ENCODE measurements at regions of chr7 and their contacts with region 1.

Region 1: DNA sequence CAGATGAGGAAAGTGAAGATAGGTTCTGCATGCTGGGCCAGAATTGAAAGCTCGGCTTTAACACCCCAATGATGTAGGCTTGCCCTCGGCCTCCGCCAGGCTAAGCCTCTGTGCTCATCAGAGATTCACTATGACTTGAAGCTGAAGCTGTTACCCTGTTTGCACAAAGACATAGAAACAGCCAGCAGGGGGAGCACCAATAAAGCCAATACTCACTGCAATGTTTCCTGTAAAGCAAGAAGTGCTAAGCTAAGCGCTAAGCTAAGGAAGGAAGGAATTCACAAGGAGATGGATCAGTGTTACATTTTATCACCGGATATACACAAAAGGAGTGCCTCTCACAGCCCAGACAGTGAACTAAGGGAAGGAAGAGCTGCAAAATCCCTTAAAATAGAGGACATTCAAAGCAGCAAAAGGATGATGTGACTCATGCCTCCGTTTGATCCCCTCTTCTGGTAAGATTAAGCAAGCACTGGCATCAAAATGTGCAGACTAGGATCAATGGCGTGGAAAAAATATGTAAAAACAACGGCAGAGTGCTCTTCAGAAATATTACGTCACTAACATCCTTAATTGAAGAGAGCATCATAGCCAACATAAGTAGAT is 153.8 kb downstream of the COBL start:
- DNase-seq: peak; percentile 41 to 88
- ATAC-seq: peak; percentile 97 to 99
- H3K4me3 ChIP-seq: no peak overlapping the region
- H3K27ac ChIP-seq: no peak overlapping the region
- H3K4me1 ChIP-seq: peaks cover 4% of the 10 kb centered on the region; the same call in 1 of the 3 replicates
- CTCF ChIP-seq: peak; percentile 94
- EP300 ChIP-seq: no peak
- POLR2A ChIP-seq: no peak
- RAD21 ChIP-seq: peak; percentile 86 to 91

Region 2: GRCh38 chr7:50142425-50143017 is 1020.3 kb before region 1 on chr7:
- CTCF ChIA-PET with region 1: interaction called, 25 read pairs
- POLR2A ChIA-PET with region 1: no interaction called
- DNase-seq: peak in 1 of 2 experiments; percentile 40
- ATAC-seq: peak in 1 of 2 experiments; percentile 53; a peak in 2 of 6 replicates
- H3K4me3 ChIP-seq: no peak overlapping the region; the same call in 2 of the 3 replicates
- H3K27ac ChIP-seq: no peak overlapping the region
- H3K4me1 ChIP-seq: no peaks in the 10 kb centered on the region; the same call in 2 of the 3 replicates
- CTCF ChIP-seq: peak; percentile 69
- EP300 ChIP-seq: no peak
- POLR2A ChIP-seq: no peak
- RAD21 ChIP-seq: peak; percentile 56 to 67

Region 3: DNA sequence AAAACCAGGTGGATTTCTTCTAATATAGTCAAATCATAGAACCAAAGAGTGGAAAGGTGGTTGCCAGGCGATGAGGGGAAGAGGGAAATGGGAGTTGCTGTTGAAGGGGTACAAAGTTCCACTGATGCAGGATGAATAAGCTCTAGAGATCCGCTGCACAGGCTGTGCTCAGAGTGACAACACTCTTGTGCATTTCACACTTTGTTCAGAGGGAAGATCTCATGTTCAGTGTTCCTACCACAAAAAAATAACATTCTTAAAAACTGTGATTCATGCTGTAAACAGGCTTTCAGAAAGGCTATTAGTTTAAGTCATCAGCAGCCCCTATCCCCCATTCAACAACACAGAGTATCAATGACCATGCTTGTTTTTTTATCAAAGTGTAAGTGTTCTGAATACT is 60.0 kb before region 1 on chr7:
- CTCF ChIA-PET with region 1: no interaction called
- POLR2A ChIA-PET with region 1: no interaction called
- DNase-seq: no peak
- ATAC-seq: no peak
- H3K4me3 ChIP-seq: no peak overlapping the region
- H3K27ac ChIP-seq: no peak overlapping the region
- H3K4me1 ChIP-seq: no peaks in the 10 kb centered on the region
- CTCF ChIP-seq: no peak
- EP300 ChIP-seq: no peak
- POLR2A ChIP-seq: no peak
- RAD21 ChIP-seq: no peak

Region 4: GRCh38 chr7:51141451-51142003 is 21.3 kb before region 1 on chr7:
- CTCF ChIA-PET with region 1: interaction called, 77 read pairs
- POLR2A ChIA-PET with region 1: no interaction called
- DNase-seq: peak; percentile 13 to 41
- ATAC-seq: peak; percentile 62 to 72; a peak in 5 of 6 replicates
- H3K4me3 ChIP-seq: no peak overlapping the region
- H3K27ac ChIP-seq: no peak overlapping the region
- H3K4me1 ChIP-seq: peaks cover 8% of the 10 kb centered on the region
- CTCF ChIP-seq: peak; percentile 77
- EP300 ChIP-seq: no peak
- POLR2A ChIP-seq: no peak
- RAD21 ChIP-seq: peak; percentile 92 to 93

Region 5: DNA sequence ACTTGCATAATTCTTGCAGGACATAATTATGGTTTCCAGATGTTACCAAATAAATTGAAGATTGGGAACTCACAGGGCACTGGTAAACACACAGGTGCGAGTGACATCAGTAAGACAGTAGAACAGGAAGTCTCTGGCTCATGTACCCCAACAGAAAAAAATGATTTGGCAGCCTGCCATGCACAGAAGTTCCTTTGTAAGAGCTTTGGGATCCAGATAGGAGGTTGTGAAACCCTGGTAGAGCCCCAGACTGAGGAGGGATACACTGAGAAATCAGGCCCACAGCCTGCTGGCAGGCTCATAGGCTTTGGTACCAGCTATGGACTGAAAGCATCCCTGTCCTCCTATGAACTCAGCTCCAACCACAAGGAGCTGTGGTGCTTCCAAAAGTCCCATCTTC is 35.8 kb after region 1 on chr7:
- CTCF ChIA-PET with region 1: interaction called, 25 read pairs
- POLR2A ChIA-PET with region 1: no interaction called
- DNase-seq: no peak
- ATAC-seq: no peak
- H3K4me3 ChIP-seq: no peak overlapping the region
- H3K27ac ChIP-seq: no peak overlapping the region
- H3K4me1 ChIP-seq: no peaks in the 10 kb centered on the region
- CTCF ChIP-seq: no peak
- EP300 ChIP-seq: no peak
- POLR2A ChIP-seq: no peak
- RAD21 ChIP-seq: no peak

Region 6: GRCh38 chr7:51366930-51367613 is 204.2 kb after region 1 on chr7:
- CTCF ChIA-PET with region 1: interaction called, 176 read pairs
- POLR2A ChIA-PET with region 1: no interaction called
- DNase-seq: peak; percentile 57 to 84
- ATAC-seq: peak; percentile 93 to 97
- H3K4me3 ChIP-seq: no peak overlapping the region
- H3K27ac ChIP-seq: no peak overlapping the region
- H3K4me1 ChIP-seq: no peaks in the 10 kb centered on the region
- CTCF ChIP-seq: peak; percentile 58
- EP300 ChIP-seq: no peak
- POLR2A ChIP-seq: no peak
- RAD21 ChIP-seq: peak; percentile 76